Naive thymus-derived CD4-positive, alpha-beta T cell (primary cell): ENCODE measurements at regions of chr6 and their contacts with region 1.

Region 1: DNA sequence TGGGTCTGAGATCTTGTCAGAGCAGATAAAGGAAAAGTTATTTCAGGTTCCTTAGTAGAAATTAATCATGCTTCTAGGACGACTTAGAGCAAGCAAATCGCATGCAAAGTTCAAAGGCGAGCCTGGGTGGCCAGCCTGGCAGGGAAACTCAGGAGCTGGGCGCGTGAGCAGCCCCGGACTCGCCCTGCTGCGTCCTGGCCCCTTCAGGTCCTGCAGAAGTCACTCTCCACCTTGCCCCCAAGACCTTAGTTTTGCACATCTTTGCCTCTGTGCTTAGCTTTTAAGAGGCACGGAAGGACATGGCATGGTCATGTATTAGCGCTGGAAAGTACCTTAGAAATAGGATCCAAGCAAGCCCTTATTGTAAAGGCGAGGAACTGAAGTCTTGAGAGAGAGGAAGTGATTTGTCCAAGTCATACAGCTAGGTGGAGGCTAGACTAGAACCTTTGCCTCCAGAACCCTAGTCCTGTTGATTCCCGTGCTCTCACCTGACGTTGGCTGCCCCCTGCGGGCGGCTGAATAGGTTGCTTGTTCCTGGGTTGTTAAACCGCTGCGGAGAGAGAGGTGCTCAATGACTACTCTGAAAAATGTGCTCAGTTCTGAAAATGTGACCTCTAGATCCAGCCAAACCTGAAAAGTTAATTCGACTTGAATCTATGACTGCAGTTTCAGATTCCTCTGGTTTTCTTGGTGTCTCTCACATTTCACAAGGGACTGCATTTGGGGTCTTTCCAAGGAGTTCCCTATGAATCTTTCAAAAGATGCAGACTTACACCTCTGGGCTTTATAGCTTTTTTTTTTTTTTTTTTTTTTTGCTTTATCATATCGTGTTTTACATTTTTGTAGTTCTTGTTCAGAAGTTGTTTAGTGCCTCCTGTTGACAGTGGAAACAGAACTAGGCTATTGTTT is 2.7 kb downstream of the MYB start:
- DNase-seq: peak; percentile 57 to 81 (median 76)
- ATAC-seq: peak; percentile 68
- H3K4me3 ChIP-seq: peak overlapping the region; percentile 56
- H3K4me3 Mint-ChIP-seq: peak overlapping the region; percentile 85 to 98 (median 90)
- H3K27ac ChIP-seq: peak overlapping the region; percentile 74
- H3K27ac Mint-ChIP-seq: peak overlapping the region; percentile 38 to 96 (median 86)
- H3K4me1 ChIP-seq: peaks cover 0 to 4% of the 10 kb centered on the region in 2 donors
- H3K4me1 Mint-ChIP-seq: peaks cover 16 to 42% (median 22%) of the 10 kb centered on the region in 7 donors
- H3K27me3 ChIP-seq: no peaks in the 10 kb centered on the region
- H3K27me3 Mint-ChIP-seq: no peaks in the 10 kb centered on the region

Region 2: DNA sequence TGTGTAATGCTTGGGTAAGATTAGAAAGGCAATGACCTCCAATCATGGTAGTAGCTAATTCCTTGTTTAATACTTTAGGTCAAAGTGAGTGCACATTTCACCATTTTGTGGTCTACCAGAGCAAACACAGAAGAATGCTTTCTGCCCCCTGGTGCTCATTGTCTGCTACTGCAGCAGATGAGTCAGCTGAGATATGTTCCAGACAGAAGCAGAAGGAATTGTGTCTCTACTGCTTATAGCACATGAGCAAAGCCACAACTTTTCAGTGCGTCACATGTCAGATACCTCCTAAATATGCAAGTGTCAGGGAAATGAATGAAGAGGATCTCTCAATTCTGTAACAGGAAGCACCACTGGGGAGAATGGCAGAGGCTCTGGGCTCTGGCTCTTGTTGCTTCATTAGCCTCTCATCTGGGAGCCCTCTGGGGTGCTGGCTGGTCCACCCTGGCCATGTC is 542.8 kb before region 1 on chr6:
- CTCF ChIA-PET with region 1: no interaction called
- POLR2A ChIA-PET with region 1: no interaction called
- intact Hi-C with region 1: loop called in 1 of 2 experiments (anchors 5 kb)
- DNase-seq: peak; percentile 33 to 82 (median 74)
- ATAC-seq: peak; percentile 97
- H3K4me3 ChIP-seq: no peak overlapping the region
- H3K4me3 Mint-ChIP-seq: peak overlapping the region in 1 of 10 donors; percentile 12
- H3K27ac ChIP-seq: no peak overlapping the region
- H3K27ac Mint-ChIP-seq: peak overlapping the region in 4 of 9 donors; percentile 5 to 44 (median 29)
- H3K4me1 ChIP-seq: peaks cover 0 to 7% of the 10 kb centered on the region in 2 donors
- H3K4me1 Mint-ChIP-seq: peaks cover 1 to 34% (median 27%) of the 10 kb centered on the region in 7 donors
- H3K27me3 ChIP-seq: no peaks in the 10 kb centered on the region
- H3K27me3 Mint-ChIP-seq: peaks cover 0 to 3% (median 0%) of the 10 kb centered on the region in 5 donors

Region 3: DNA sequence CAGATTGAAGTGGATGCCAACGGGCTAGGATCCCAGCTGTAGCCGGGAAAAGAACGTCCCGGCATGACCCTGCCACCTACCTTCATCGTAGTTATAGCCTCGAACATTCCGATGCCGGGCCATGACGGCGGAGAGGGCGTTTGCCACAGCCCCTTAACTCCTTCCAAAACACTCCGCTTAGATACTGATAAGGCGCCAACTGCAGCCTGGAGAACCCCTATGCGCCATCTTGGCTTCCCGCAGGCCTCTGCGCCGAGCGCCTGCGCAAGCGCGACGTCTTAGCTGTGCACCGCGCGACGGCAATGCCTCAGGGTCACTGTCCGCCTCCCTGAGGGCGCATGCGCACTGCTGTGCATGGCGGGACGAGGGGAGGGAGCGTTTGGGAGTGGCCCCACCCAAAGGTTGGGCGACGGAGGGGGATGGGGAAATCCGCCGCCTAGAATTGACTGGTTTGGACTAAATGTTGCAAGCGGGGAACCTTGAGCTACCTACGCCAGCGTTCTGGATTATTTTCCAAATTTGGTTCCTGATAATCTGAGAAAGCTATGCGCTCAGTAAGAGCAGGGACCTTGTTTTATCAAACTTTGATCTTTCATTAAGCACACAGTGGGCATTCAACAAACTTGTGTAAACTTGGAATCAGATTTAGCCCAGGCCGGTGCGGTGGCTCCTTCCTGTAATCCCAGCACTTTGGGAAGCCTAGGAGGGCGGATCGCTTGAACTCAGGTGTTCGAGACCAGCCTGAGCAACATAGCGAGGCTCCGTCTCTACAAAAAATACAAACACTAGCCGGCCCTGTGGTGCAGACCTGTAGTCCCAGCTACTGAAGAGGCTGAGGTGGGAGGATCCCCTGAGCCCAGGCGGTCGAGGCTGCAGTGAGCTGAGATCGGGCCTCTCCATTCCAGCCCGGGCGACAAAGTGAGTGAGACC is 129.0 kb before region 1 on chr6 and contains the start of gene HBS1L:
- CTCF ChIA-PET with region 1: interaction called, 9 read pairs
- POLR2A ChIA-PET with region 1: interaction called, 10 read pairs
- intact Hi-C with region 1: loop called (anchors 1 kb)
- DNase-seq: peak; percentile 93 to 98 (median 96)
- ATAC-seq: peak; percentile 97
- H3K4me3 ChIP-seq: peak within 1 kb of the TSS; percentile 96
- H3K4me3 Mint-ChIP-seq: peak within 1 kb of the TSS; percentile 89 to 100 (median 97)
- H3K27ac ChIP-seq: peak within 1 kb of the TSS; percentile 97
- H3K27ac Mint-ChIP-seq: peak within 1 kb of the TSS; percentile 97 to 100 (median 98)
- H3K4me1 ChIP-seq: peaks cover 10 to 13% of the 10 kb centered on the region in 2 donors
- H3K4me1 Mint-ChIP-seq: peaks cover 21 to 51% (median 46%) of the 10 kb centered on the region in 7 donors
- H3K27me3 ChIP-seq: no peaks in the 10 kb centered on the region
- H3K27me3 Mint-ChIP-seq: peaks cover 0 to 3% (median 0%) of the 10 kb centered on the region in 5 donors
- total RNA-seq, gene HBS1L: 70.0 to 112 (median 83.1) TPM

Region 4: GRCh38 chr6:135105710-135106109 is 78.1 kb before region 1 on chr6:
- CTCF ChIA-PET with region 1: no interaction called
- POLR2A ChIA-PET with region 1: interaction called, 10 read pairs
- intact Hi-C with region 1: loop called in 1 of 2 experiments (anchors 1 kb)
- DNase-seq: no peak
- ATAC-seq: no peak
- H3K4me3 ChIP-seq: no peak overlapping the region
- H3K4me3 Mint-ChIP-seq: peak overlapping the region in 2 of 10 donors; percentile 8 to 83
- H3K27ac ChIP-seq: no peak overlapping the region
- H3K27ac Mint-ChIP-seq: peak overlapping the region in 8 of 9 donors; percentile 77 to 97 (median 90)
- H3K4me1 ChIP-seq: peaks cover 28 to 45% of the 10 kb centered on the region in 2 donors
- H3K4me1 Mint-ChIP-seq: peaks cover 31 to 83% (median 73%) of the 10 kb centered on the region in 7 donors
- H3K27me3 ChIP-seq: no peaks in the 10 kb centered on the region
- H3K27me3 Mint-ChIP-seq: no peaks in the 10 kb centered on the region

Region 5: DNA sequence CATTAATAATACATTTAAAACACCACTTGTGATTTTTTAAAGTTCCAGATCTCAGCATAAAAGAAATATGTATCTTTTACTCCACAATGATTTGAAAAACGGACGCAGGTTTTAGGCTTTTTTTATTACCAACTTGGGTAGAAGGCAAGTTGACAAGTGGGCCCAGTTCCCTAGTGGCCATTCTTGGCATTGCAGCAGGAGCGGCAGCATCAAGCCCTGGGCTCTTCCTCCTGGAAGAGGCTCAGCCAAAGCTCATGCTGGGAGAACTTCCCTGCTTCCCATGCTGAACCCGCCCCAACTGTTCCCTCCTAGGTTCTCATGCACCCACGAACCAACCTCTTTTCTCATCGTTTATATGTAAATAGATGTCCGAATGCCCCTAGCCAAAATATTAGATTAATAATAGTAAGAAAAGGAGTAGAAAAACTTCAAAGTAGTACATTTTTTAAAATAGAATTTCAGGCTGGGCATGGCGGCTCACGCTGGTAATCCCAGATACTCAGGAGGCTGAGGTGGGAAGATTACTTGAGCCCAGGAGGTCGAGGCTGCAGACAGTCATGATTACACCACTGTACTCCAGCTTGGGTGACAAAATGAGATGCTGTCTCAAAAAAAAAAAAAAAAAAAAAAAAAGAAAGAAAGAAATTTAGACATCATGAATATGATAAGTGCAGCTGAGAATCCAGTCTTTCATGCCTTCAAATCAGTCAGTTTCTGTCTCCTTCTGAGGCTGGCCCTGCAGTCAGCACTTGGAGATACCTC is 20.9 kb before region 1 on chr6:
- CTCF ChIA-PET with region 1: interaction called, 4 read pairs
- POLR2A ChIA-PET with region 1: interaction called, 14 read pairs
- intact Hi-C with region 1: loop called (anchors 1 kb)
- DNase-seq: peak in 2 of 9 donors; percentile 10 to 11
- ATAC-seq: no peak
- H3K4me3 ChIP-seq: no peak overlapping the region
- H3K4me3 Mint-ChIP-seq: peak overlapping the region in 6 of 10 donors; percentile 43 to 63 (median 59)
- H3K27ac ChIP-seq: peak overlapping the region; percentile 6
- H3K27ac Mint-ChIP-seq: peak overlapping the region in 8 of 9 donors; percentile 1 to 89 (median 47)
- H3K4me1 ChIP-seq: peaks cover 5 to 22% of the 10 kb centered on the region in 2 donors
- H3K4me1 Mint-ChIP-seq: peaks cover 11 to 57% (median 37%) of the 10 kb centered on the region in 7 donors
- H3K27me3 ChIP-seq: no peaks in the 10 kb centered on the region
- H3K27me3 Mint-ChIP-seq: no peaks in the 10 kb centered on the region

Region 6: GRCh38 chr6:135438907-135439535 is 255.2 kb after region 1 on chr6:
- CTCF ChIA-PET with region 1: no interaction called
- POLR2A ChIA-PET with region 1: no interaction called
- intact Hi-C with region 1: loop called in 1 of 2 experiments (anchors 5 kb)
- DNase-seq: peak in 6 of 9 donors; percentile 23 to 39 (median 27)
- ATAC-seq: peak; percentile 72
- H3K4me3 ChIP-seq: no peak overlapping the region
- H3K4me3 Mint-ChIP-seq: peak overlapping the region in 8 of 10 donors; percentile 15 to 85 (median 72)
- H3K27ac ChIP-seq: no peak overlapping the region
- H3K27ac Mint-ChIP-seq: peak overlapping the region in 7 of 9 donors; percentile 7 to 87 (median 60)
- H3K4me1 ChIP-seq: peaks cover 0 to 8% of the 10 kb centered on the region in 2 donors
- H3K4me1 Mint-ChIP-seq: peaks cover 12 to 27% (median 20%) of the 10 kb centered on the region in 7 donors
- H3K27me3 ChIP-seq: no peaks in the 10 kb centered on the region
- H3K27me3 Mint-ChIP-seq: no peaks in the 10 kb centered on the region